ENCODE measurements at regions of chr14 and their contacts with region 1.

Region 1: GRCh38 chr14:103078093-103078749 is 5.8 kb upstream of the LBHD2 start:
- DNase-seq: peak; percentile 47 to 90
- ATAC-seq: peak; percentile 75 to 82 (median 76)
- H3K4me3 ChIP-seq: no peak overlapping the region
- H3K4me3 Mint-ChIP-seq: no peak overlapping the region
- H3K27ac ChIP-seq: no peak overlapping the region
- H3K27ac Mint-ChIP-seq: no peak overlapping the region
- H3K4me1 ChIP-seq: peaks cover 14% of the 10 kb centered on the region
- H3K4me1 Mint-ChIP-seq: no peaks in the 10 kb centered on the region
- H3K27me3 ChIP-seq: peaks cover 10% of the 10 kb centered on the region
- H3K27me3 Mint-ChIP-seq: peaks cover 0 to 4% of the 10 kb centered on the region in 2 donors
- CTCF ChIP-seq: peak; percentile 64

Region 2: DNA sequence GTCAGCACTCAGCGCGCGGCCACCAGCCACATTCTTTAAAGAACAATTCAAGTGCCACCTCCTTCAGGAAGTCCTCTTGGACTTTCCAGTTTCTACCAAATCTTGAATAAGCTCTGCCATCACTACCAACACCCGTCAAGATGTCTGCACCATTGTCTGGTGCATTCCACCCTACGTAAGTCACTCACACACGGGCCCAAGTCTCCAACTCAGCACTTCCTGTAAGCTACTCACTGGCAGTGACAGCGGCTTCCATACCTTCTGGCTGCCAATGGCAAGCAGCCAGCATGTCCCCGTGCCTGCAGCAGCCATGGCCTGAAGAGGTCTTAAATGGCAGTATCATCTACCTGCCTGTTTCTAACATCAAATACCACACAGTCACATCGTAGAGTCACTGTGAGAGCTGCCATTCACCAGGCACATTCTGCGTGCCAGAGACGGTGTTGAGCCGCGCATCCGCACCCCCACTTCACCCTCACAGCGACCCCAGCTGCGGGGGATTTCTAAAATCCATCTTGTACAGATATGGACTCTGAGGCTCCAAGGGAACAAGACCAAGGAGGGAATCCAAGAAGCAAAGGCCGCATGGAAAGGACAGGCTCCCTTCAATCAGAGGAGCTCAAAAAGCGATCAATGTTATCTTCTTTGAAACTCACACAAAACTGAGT is 69.2 kb before region 1 on chr14:
- intact Hi-C with region 1: no loop called
- DNase-seq: no peak
- ATAC-seq: no peak
- H3K4me3 ChIP-seq: no peak overlapping the region
- H3K4me3 Mint-ChIP-seq: no peak overlapping the region
- H3K27ac ChIP-seq: no peak overlapping the region
- H3K27ac Mint-ChIP-seq: no peak overlapping the region
- H3K4me1 ChIP-seq: no peaks in the 10 kb centered on the region
- H3K4me1 Mint-ChIP-seq: no peaks in the 10 kb centered on the region
- H3K27me3 ChIP-seq: no peaks in the 10 kb centered on the region
- H3K27me3 Mint-ChIP-seq: peaks cover 0 to 7% of the 10 kb centered on the region in 2 donors
- CTCF ChIP-seq: no peak

Region 3: DNA sequence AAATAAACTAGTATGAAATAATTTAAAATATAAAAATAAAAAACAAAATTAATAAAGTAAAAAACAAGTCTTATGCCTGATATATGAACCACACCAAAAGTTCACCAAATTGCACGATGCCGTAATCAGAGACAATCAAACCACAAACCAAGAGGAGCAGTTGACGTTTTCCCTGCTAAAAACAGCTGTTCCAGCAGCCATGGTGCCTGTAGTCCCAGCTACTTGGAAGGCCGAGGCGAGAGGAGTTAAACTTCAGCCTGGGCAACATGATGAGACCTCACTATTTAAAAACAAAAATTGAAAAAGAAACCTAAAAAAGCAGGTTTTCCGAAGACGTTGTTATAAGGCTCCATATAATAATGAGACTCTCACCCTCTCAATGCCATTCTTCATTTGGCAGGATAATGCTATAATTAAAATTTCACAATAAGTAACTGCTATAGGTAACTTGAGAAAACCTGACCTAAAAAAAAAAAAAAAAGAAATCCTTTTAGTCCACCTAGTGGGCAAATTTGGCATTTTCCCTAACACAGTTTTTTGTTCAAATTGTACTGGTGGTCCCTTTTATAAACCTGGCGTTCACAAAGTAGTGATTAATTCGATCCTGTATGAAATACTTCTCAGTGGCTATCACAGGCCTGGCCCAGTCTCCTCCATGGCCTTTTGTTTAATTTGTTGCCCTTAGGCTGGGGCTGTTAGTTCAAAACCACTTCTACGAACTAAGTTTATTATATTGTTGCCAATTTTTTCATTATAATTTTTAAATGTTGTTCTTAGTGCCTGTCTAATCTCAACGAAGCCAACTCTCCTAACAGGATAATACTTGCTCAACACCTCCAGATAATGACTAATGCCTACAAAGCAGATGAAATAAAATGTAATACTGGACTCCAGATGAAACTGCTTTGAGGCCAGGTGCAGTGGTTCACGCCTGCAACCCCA is 107.1 kb after region 1 on chr14:
- intact Hi-C with region 1: loop called (anchors 5 kb)
- DNase-seq: peak in 1 of 2 donors; percentile 53
- ATAC-seq: no peak
- H3K4me3 ChIP-seq: no peak overlapping the region
- H3K4me3 Mint-ChIP-seq: no peak overlapping the region
- H3K27ac ChIP-seq: no peak overlapping the region
- H3K27ac Mint-ChIP-seq: no peak overlapping the region
- H3K4me1 ChIP-seq: no peaks in the 10 kb centered on the region
- H3K4me1 Mint-ChIP-seq: peaks cover 5% of the 10 kb centered on the region in 2 donors
- H3K27me3 ChIP-seq: peaks cover 15% of the 10 kb centered on the region
- H3K27me3 Mint-ChIP-seq: peaks cover 37 to 50% of the 10 kb centered on the region in 2 donors
- CTCF ChIP-seq: peak; percentile 66

Region 4: DNA sequence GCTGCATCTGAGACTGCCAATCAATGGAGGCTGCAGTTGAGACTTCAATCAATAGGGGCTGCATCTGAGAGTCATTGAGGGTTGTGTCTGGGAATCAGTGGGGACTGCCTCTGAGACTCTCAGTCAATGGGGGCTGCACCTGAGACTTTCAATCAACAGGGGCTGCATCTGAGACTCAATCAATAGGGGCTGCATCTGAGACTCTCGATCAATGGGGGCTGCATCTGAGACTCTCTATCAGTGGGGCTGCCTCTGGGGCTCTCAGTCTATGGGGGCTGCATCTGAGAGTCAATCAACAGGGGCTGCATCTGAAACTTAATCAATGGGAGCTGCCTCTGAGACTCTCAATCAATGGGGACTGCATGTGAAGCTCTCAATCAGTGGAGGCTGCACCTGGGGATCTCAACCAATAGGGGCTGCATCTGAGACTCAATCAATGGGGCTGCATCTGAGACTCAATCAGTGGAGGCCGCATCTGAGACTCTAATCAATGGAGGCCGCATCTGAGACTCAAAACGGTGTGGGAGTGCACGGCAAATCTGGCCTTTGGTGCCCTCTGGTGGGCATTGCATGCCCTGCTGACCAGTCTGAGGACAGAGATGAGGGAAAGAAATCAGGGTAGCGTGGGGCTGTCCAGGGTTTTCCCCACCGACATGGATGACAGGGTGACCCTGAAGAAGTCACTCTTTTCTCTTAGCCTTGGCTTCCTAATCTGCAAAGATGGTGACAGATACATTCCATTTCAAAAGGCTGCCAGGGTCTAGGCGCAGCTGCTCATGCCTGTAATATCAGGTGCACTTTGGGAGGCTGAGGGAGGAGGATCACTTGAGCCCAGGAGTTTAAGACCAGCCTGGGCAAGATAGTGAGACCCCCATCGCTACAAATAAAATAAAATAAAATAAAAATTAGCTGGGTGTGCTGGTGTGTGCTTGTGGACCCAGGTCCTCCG is 214.5 kb after region 1 on chr14:
- intact Hi-C with region 1: loop called (anchors 10 kb)
- DNase-seq: peak; percentile 64 to 84
- ATAC-seq: peak; percentile 84 to 97 (median 94)
- H3K4me3 ChIP-seq: no peak overlapping the region
- H3K4me3 Mint-ChIP-seq: no peak overlapping the region
- H3K27ac ChIP-seq: no peak overlapping the region
- H3K27ac Mint-ChIP-seq: no peak overlapping the region
- H3K4me1 ChIP-seq: no peaks in the 10 kb centered on the region
- H3K4me1 Mint-ChIP-seq: peaks cover 7 to 8% of the 10 kb centered on the region in 2 donors
- H3K27me3 ChIP-seq: no peaks in the 10 kb centered on the region
- H3K27me3 Mint-ChIP-seq: peaks cover 13 to 27% of the 10 kb centered on the region in 2 donors
- CTCF ChIP-seq: peak; percentile 83

Measured in natural killer cell (primary cell).